ENCODE measurements at regions of chr6 and their contacts with region 1.

Region 1: DNA sequence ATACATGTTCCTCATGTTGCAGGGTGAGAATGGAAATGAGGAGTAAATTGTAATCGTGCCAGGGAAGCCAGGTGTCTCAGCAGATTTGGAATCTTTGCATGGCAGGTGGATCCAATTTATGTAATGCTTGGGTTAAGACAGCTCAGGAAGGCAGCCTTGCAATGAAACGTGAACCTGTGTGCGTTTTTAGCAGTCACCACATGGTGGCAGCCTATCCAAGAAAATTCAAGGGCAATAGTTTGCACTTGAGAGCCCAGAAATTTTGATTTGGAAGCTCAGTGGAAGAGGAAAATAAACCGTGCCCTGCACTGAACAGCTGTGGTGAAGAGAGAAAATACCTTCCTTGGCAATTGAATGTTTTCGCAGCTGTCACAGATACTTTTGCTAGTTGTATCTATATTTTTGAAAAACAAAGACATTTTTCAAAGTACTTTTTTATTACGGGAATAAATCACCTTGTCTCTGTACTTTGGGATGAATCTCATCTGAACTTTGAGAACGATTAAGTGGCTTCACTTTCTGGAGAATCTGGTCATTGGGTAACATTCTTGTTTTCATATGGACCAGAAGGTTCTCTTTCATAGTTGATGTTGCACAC is 26.5 kb downstream of the MTHFD1L start:
- DNase-seq: peak; percentile 43
- H3K27ac ChIP-seq: no peak overlapping the region
- CTCF ChIP-seq: peak; percentile 83

Region 2: GRCh38 chr6:150756173-150756572 is 135.8 kb before region 1 on chr6:
- CTCF ChIA-PET with region 1: no interaction called
- POLR2A ChIA-PET with region 1: no interaction called
- DNase-seq: no peak
- H3K27ac ChIP-seq: no peak overlapping the region
- CTCF ChIP-seq: no peak

Region 3: GRCh38 chr6:150878347-150879218 is 13.4 kb before region 1 on chr6:
- CTCF ChIA-PET with region 1: interaction called, 10 read pairs
- POLR2A ChIA-PET with region 1: no interaction called
- DNase-seq: no peak
- H3K27ac ChIP-seq: no peak overlapping the region
- CTCF ChIP-seq: no peak

Region 4: DNA sequence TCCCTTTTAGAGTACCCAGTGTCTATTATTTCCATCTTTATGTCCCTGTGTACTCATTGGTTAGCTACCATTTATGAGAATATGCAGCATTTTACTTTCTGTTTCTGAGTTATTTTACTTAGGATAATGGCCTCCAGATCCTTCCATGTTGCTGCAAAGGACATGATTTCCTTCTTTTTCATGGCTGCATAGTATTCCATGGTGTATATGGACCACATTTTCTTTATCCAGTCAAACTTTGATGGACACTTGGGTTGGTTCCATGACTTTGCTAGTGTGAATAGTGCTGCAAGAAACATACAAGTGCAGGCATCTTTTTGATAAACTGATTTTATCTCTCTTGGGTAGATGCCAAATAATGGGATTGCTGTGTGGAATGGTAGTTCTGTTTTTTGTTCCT is 443.9 kb after region 1 on chr6:
- CTCF ChIA-PET with region 1: interaction called, 20 read pairs
- POLR2A ChIA-PET with region 1: no interaction called
- DNase-seq: no peak
- H3K27ac ChIP-seq: no peak overlapping the region
- CTCF ChIP-seq: no peak

Measured in RWPE1 (cell line).